Left cardiac atrium (tissue), 4 donors: ENCODE measurements at regions of chr17 and their contacts with region 1.

Region 1: GRCh38 chr17:80839511-80839941 is 152.1 kb upstream of the CHMP6 start:
- DNase-seq: no peak
- ATAC-seq: no peak

Region 2: DNA sequence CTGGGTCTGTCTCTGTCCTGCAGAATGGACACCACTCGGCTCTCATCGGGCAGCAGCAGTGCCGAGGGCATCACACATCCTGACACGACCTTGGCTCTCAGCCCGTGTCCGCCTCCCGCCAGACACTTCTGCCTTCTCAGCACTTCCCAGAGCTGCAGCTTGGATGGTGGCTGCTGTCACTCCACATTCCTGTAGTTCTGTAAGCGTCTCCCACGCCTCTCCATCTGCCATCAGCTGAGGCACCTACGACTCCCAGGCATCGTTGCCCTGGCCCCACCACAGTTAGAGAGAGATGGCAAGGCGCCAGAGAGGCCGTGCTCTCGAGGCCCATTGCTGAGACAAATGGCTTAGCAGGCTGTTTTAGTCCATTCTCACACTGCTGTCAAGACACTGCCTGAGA is 43.8 kb before region 1 on chr17:
- intact Hi-C with region 1: loop called in 1 of 2 experiments (anchors 5 kb)
- DNase-seq: peak; percentile 71
- ATAC-seq: peak; percentile 89 to 90

Region 3: GRCh38 chr17:80876950-80877728 is 37.6 kb after region 1 on chr17:
- intact Hi-C with region 1: no loop called
- DNase-seq: peak; percentile 9
- ATAC-seq: no peak

Region 4: GRCh38 chr17:80942421-80943345 is 103.2 kb after region 1 on chr17:
- intact Hi-C with region 1: no loop called
- DNase-seq: peak; percentile 94
- ATAC-seq: peak; percentile 92 to 95

Region 5: GRCh38 chr17:81125573-81126081 is 286.1 kb after region 1 on chr17:
- intact Hi-C with region 1: no loop called
- DNase-seq: no peak
- ATAC-seq: peak in 1 of 2 donors; percentile 14